ENCODE measurements at regions of chr5 and their contacts with region 1.

Region 1: DNA sequence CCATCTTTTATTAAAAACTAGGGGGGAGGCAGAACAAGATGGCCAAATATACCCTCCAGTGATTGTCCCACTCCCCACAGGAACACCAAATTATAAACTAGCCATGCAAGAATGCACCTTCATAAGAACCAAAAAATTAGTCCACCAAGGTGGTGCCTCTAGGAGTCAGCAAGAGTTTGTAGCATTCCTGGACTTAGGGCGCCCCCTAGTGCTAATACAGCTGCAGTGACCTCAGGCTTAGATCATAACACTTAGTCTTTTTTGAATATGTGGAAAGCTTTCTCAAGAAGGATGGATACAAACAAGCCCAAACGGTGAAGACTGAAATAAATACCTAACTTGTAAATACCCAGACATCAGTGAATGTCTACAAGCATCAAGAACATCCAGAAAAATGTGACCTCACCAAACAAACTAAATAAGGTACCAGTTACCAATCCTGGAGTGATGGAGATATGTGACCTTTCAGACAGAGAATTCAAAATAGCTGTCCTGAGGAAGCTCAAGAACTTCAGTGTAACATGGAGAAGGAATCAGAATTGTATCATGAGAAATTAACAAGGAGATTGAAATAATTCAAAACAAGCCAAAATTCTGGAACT is 19.3 kb downstream of the PPIP5K2 start:
- DNase-seq: peak; percentile 79
- H3K4me3 ChIP-seq: no peak overlapping the region; a peak in 1 of 4 replicates
- H3K27ac ChIP-seq: no peak overlapping the region
- H3K4me1 ChIP-seq: no peaks in the 10 kb centered on the region
- H3K27me3 ChIP-seq: no peaks in the 10 kb centered on the region
- CTCF ChIP-seq: peak; percentile 98
- EP300 ChIP-seq: no peak
- RAD21 ChIP-seq: peak; percentile 95

Region 2: DNA sequence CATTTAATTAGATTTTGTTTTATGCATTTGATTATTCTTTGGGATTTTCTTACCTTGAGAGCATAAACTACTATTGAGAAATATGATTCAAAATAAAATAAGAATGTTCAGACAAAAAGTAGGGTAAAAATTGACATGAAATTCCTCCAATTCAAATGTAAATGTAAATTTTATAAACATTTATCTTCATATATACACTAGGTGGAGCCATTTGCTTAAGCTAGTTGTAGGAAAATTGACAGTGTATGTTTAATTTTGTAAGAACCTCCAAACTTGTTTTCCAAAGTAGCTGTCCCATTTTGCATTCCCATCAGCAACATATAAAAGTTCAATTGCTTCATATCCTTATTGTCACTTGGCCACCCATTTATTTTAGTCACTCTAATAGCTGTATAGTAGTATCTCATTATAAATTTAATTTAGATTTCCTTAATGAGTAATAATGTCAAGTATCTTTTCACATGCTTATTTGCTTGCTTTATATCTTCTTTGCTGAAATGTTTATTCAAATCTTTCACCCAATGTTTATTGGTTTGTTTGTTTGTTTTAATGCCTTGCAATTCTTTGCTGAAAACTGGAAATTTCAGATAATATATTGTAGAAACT is 602.9 kb before region 1 on chr5:
- CTCF ChIA-PET with region 1: interaction called, 18 read pairs
- POLR2A ChIA-PET with region 1: no interaction called
- DNase-seq: peak; percentile 6
- H3K4me3 ChIP-seq: no peak overlapping the region
- H3K27ac ChIP-seq: no peak overlapping the region
- H3K4me1 ChIP-seq: no peaks in the 10 kb centered on the region; a peak in 1 of 4 replicates
- H3K27me3 ChIP-seq: no peaks in the 10 kb centered on the region
- CTCF ChIP-seq: peak; percentile 68
- EP300 ChIP-seq: no peak
- RAD21 ChIP-seq: peak; percentile 74

Region 3: GRCh38 chr5:102754767-102755431 is 384.5 kb before region 1 on chr5 and contains the start of gene PAM:
- CTCF ChIA-PET with region 1: interaction called, 10 read pairs
- POLR2A ChIA-PET with region 1: no interaction called
- DNase-seq: peak; percentile 93
- H3K4me3 ChIP-seq: peak within 1 kb of the TSS; percentile 72 to 96
- H3K27ac ChIP-seq: peak within 1 kb of the TSS; percentile 89
- H3K4me1 ChIP-seq: peaks cover 20 to 22% of the 10 kb centered on the region in 2 experiments; a peak in 3 of 4 replicates
- H3K27me3 ChIP-seq: no peaks in the 10 kb centered on the region
- CTCF ChIP-seq: no peak
- EP300 ChIP-seq: no peak
- RAD21 ChIP-seq: no peak
- polyA plus RNA-seq, gene PAM: 507 and 662 TPM in 2 replicates

Region 4: DNA sequence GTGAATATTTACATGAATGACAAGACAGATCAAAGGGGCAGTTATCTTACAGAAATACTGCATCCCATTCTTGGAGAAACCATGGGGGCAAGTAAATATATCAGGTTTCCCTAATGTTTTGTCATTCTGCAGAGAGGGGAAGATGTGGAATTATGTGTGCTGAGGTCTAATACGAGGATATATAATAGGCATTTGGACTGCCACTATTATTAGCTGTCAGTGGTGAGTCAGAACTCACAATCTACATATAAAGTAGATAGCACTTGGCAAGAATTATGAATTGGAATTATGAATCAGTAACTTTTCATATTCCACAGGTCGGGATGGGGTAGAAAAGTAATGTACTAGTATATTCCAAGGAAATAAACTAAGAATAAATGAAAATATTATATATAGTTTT is 141.1 kb before region 1 on chr5:
- CTCF ChIA-PET with region 1: no interaction called
- POLR2A ChIA-PET with region 1: no interaction called
- DNase-seq: no peak
- H3K4me3 ChIP-seq: no peak overlapping the region
- H3K27ac ChIP-seq: no peak overlapping the region
- H3K4me1 ChIP-seq: no peaks in the 10 kb centered on the region; a peak in 1 of 4 replicates
- H3K27me3 ChIP-seq: no peaks in the 10 kb centered on the region
- CTCF ChIP-seq: no peak
- EP300 ChIP-seq: no peak
- RAD21 ChIP-seq: no peak

Region 5: DNA sequence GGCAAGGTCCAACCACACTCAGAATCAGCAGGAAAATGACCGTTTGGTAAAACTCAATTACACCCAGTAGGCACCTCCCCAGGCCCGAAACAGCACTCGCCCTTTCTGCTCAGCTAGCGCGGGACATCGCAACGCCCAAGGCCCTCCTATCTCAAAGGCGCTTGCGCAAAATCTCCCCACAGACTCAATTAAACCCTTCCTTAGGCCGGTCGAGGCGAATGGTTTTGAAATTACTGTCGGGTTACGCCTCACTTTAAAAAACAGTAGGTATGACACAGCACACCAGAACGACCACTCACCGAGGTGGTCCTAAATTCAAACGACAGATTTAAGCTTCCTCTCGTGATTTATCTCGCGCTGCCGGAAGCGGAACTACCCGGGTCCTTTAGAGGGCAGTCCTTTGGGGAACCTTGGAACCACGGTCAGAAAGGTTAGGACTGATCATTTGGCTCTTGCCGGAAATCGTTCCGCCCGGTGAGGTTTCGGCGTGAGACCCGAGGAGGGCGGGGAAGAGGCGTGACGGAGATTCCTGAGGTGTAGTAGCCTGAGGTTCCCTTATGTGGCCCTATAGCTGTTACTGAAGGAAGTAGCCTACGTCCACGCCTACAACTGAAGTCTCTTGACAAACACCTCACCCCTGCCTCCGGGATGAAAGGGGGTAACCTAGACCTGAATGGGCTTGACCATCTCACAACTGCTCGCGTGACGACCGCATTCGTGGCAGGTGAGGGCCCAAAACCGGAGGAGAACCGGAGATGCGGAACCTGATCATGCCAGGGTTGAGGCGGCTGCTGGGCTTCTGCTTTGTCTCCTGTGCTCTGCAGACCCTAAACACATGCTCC is 19.4 kb before region 1 on chr5 and contains the starts of genes GIN1 and PPIP5K2:
- CTCF ChIA-PET with region 1: interaction called, 13 read pairs
- POLR2A ChIA-PET with region 1: no interaction called
- DNase-seq: peak; percentile 81
- H3K4me3 ChIP-seq: peak within 1 kb of the TSS; percentile 82 to 97
- H3K27ac ChIP-seq: peak within 1 kb of the TSS; percentile 96 to 99
- H3K4me1 ChIP-seq: peaks cover 0 to 12% of the 10 kb centered on the region in 2 experiments; a peak in 2 of 4 replicates
- H3K27me3 ChIP-seq: no peaks in the 10 kb centered on the region
- CTCF ChIP-seq: no peak
- EP300 ChIP-seq: no peak; a peak in 3 of 4 replicates
- RAD21 ChIP-seq: no peak
- polyA plus RNA-seq, gene GIN1: 1.3 and 1.6 TPM in 2 replicates
- polyA plus RNA-seq, gene PPIP5K2: 18.2 and 24.4 TPM in 2 replicates